Activated CD8-positive, alpha-beta T cell treated with anti-CD3 and anti-CD28 coated beads for 36 hours (primary cell): ENCODE measurements at regions of chr3 and their contacts with region 1.

Region 1: DNA sequence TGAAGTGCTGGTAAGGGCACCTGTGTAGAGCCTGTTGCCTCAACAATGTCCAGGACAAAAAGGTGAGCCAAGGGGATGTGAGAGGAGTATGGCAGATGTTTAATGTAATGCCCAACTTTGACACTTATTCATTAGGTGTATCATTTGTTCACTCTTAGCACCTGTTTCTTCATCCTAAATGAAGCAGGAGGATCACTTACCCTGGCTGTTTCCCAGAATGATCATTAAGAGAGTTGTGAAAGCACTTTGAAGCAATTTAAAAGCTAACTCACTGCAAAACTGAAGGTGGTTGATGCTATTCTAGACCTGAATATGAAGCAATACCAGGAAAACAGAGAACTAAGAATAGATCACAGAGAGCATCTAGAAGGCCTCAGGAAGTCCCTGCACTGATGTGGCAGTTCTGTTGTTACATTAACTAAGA is 3.4 kb upstream of the HHLA2 start:
- DNase-seq: peak; percentile 46
- ATAC-seq: peak; percentile 74
- H3K4me3 Mint-ChIP-seq: peak overlapping the region; percentile 48
- H3K27ac Mint-ChIP-seq: peak overlapping the region; percentile 84
- H3K4me1 Mint-ChIP-seq: peaks cover 57% of the 10 kb centered on the region
- H3K27me3 Mint-ChIP-seq: no peaks in the 10 kb centered on the region
- CTCF ChIP-seq: no peak

Region 2: DNA sequence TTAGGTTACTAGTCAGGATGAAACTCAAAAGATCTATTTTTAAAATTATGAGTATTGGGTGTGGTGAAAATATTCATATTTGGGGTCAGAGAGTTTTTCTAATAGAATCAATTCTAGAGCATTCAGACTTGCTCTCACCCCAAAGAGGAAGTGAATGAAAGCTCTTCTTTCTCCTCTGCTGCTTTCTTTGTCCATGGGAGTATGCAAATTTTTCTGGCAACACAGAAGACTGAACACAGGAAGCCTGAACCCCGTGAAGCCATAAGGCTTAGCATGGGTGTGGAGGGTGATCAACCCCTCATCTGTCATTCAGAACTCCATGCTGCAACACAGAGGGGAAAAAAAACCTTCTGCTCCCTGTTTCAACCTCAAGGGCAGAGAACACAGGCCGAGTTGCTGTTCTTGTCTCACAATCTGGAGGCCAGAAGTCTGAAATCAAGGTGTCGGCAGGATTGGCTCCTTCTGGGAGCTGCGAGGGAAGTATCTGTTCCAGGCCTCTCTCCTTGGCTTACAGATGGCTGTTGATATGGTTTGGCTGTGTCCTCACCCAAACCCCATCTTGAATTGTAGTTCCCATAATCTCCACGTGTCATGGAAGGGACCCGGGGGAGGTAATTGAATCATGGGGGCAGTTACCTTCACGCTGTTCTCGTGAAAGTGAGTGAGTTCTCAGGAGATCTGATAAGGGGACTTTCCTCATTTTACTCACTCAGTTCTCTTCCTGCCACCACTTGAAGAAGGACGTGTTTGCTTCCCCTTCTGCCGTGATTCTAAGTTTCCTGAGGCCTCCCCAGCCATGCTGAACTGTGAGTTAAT is 168.4 kb before region 1 on chr3:
- CTCF ChIA-PET with region 1: no interaction called
- POLR2A ChIA-PET with region 1: no interaction called
- intact Hi-C with region 1: loop called (anchors 10 kb)
- DNase-seq: peak; percentile 88
- ATAC-seq: peak; percentile 71
- H3K4me3 Mint-ChIP-seq: peak overlapping the region; percentile 92
- H3K27ac Mint-ChIP-seq: peak overlapping the region; percentile 100
- H3K4me1 Mint-ChIP-seq: peaks cover 60% of the 10 kb centered on the region
- H3K27me3 Mint-ChIP-seq: no peaks in the 10 kb centered on the region
- CTCF ChIP-seq: no peak

Region 3: GRCh38 chr3:108221911-108222852 is 70.7 kb before region 1 on chr3 and contains the start of gene IFT57:
- CTCF ChIA-PET with region 1: interaction called, 3 read pairs
- POLR2A ChIA-PET with region 1: interaction called, 3 read pairs
- intact Hi-C with region 1: loop called (anchors 5 kb)
- DNase-seq: peak; percentile 97
- ATAC-seq: peak; percentile 93
- H3K4me3 Mint-ChIP-seq: peak within 1 kb of the TSS; percentile 99
- H3K27ac Mint-ChIP-seq: peak within 1 kb of the TSS; percentile 99
- H3K4me1 Mint-ChIP-seq: peaks cover 45% of the 10 kb centered on the region
- H3K27me3 Mint-ChIP-seq: no peaks in the 10 kb centered on the region
- CTCF ChIP-seq: no peak
- total RNA-seq, gene IFT57: 30.9 to 35.3 TPM

Region 4: DNA sequence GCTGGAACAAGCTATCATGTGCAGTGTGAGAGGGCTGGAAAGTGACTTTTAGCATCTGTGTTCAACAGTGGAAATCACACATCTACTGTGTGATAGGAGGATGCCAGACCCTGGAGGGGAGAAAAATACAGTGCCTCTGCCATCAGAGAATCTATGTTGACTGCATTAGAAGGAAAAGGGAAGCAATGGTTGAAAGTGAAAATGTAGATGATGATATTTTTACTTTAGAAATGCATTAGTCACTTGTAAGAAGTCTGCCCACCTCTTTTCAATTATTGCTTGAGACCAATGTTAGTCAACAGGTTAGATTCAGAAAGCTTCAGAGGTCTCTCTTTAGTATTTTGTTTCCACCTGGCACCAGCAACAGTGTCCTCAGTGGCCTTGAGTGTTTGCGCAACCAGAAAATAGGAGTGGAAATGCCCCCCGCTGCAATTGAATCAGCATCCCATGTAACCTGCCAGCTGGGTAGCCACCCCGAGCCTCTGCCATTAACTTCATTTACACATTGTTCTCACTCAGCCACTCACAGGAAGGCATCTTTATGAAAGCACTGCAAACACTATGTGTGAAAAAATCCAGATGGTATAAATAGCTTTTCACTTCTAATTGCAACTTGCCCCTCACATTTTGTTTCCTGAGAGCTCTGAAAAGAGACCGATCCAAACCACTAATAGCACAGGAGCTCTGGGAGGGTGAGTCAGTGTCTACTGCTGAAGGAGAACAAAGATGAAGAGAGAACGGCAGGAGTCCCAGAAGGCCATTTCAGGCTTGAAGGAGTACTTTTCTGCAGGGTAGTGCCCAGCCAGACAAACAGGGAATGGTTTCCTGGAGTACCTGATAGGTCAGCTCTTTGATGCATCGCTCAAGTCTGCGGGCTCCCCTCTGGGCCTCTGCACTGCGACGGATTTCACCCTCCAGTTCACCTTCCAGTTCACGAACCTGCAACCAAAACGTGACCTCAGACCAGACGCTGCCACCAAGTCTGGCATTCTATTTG is 95.5 kb after region 1 on chr3:
- CTCF ChIA-PET with region 1: interaction called, 5 read pairs
- POLR2A ChIA-PET with region 1: interaction called, 4 read pairs
- intact Hi-C with region 1: loop called (anchors 5 kb)
- DNase-seq: peak; percentile 51
- ATAC-seq: peak; percentile 85
- H3K4me3 Mint-ChIP-seq: peak overlapping the region; percentile 24
- H3K27ac Mint-ChIP-seq: peak overlapping the region; percentile 71
- H3K4me1 Mint-ChIP-seq: peaks cover 27% of the 10 kb centered on the region
- H3K27me3 Mint-ChIP-seq: peaks cover 7% of the 10 kb centered on the region
- CTCF ChIP-seq: no peak